Ascending aorta (tissue), 2 donors: ENCODE measurements at regions of chr2 and their contacts with region 1.

Region 1: DNA sequence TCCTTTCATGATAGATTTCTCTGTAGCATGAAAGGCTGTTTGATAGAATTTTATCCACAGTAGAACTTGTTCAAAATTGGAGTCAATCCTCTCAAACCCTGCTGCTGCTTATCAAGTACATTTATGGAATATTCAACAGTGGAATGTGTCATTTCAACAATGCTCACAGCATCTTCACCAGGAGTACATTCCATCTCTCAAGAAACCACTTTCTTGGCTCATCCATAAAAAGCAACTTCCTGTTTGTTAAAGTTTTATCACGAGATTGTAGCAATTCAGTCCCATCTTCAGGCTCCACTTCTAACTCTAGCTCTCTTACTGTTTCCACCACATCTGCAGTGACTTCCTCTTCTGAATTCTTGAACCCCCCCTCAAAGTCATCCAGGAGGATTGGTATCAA is 29.4 kb downstream of the PDCL3 start:
- DNase-seq: no peak
- H3K4me3 ChIP-seq: no peak overlapping the region
- H3K27ac ChIP-seq: no peak overlapping the region
- H3K4me1 ChIP-seq: no peaks in the 10 kb centered on the region
- H3K27me3 ChIP-seq: no peaks in the 10 kb centered on the region
- CTCF ChIP-seq: no peak

Region 2: DNA sequence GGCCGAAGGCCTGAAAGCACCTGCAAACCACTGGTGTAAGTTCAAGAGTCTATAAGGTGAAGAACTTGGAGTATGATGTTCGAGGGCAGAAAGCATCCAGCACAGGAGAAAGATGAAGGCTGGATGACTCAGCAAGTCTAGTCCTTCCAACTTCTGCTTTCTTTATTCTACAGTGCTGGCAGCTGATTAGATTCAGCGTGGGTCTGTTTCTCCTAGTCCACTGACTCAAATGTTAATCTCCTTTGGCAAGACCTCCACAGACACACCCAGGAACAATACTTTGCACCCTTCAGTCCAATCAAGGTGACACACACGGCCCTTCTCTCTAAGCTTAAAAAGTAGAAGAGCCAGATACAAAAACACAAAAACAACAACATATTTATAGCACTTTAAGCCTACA is 78.6 kb before region 1 on chr2:
- intact Hi-C with region 1: no loop called
- DNase-seq: no peak
- H3K4me3 ChIP-seq: no peak overlapping the region
- H3K27ac ChIP-seq: no peak overlapping the region
- H3K4me1 ChIP-seq: no peaks in the 10 kb centered on the region
- H3K27me3 ChIP-seq: no peaks in the 10 kb centered on the region
- CTCF ChIP-seq: no peak

Region 3: GRCh38 chr2:100524331-100524730 is 67.9 kb before region 1 on chr2:
- intact Hi-C with region 1: no loop called
- DNase-seq: no peak
- H3K4me3 ChIP-seq: no peak overlapping the region
- H3K27ac ChIP-seq: no peak overlapping the region
- H3K4me1 ChIP-seq: no peaks in the 10 kb centered on the region
- H3K27me3 ChIP-seq: no peaks in the 10 kb centered on the region
- CTCF ChIP-seq: no peak

Region 4: DNA sequence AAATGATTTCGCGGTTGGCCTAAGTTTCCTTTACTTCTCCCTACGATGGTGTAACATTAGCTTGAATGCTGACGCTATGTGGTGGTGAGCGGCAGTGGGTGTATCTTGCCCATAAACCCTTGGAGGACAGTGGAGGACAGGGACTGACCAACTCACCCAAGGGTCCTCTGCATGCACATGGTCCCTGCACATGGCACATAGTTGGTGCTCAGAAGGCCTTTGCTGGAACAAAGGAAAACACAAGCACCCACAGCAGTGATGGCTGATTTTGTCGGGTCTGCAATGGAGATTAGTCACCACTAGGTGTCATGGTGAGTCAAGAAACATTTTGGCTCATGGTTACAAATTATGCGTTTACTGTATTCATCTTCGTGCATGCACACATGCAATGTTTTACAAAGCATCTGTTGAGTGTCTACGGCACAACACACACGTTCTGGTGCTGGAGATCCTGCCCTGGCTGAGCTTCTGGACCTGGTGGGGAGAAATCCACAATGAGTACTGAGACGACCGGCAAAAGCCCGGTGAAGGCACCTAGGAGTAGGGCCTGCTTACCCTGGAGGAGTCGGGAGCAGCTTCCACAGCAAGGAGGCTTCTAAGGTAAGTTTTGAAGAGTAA is 14.6 kb after region 1 on chr2:
- intact Hi-C with region 1: loop called (anchors 1 kb)
- DNase-seq: peak in 1 of 2 donors; percentile 66
- H3K4me3 ChIP-seq: no peak overlapping the region
- H3K27ac ChIP-seq: no peak overlapping the region
- H3K4me1 ChIP-seq: peaks cover 5 to 10% of the 10 kb centered on the region in 2 donors
- H3K27me3 ChIP-seq: no peaks in the 10 kb centered on the region
- CTCF ChIP-seq: peak; percentile 58 to 79 (median 73)

Region 5: GRCh38 chr2:101736861-101737291 is 1144.7 kb after region 1 on chr2:
- intact Hi-C with region 1: no loop called
- DNase-seq: no peak
- H3K4me3 ChIP-seq: no peak overlapping the region
- H3K27ac ChIP-seq: peak overlapping the region; percentile 54 to 55
- H3K4me1 ChIP-seq: peaks cover 10 to 53% of the 10 kb centered on the region in 2 donors
- H3K27me3 ChIP-seq: no peaks in the 10 kb centered on the region
- CTCF ChIP-seq: no peak